Activated CD8-positive, alpha-beta T cell treated with anti-CD3 and anti-CD28 coated beads for 36 hours (primary cell): ENCODE measurements at regions of chr1 and their contacts with region 1.

Region 1: DNA sequence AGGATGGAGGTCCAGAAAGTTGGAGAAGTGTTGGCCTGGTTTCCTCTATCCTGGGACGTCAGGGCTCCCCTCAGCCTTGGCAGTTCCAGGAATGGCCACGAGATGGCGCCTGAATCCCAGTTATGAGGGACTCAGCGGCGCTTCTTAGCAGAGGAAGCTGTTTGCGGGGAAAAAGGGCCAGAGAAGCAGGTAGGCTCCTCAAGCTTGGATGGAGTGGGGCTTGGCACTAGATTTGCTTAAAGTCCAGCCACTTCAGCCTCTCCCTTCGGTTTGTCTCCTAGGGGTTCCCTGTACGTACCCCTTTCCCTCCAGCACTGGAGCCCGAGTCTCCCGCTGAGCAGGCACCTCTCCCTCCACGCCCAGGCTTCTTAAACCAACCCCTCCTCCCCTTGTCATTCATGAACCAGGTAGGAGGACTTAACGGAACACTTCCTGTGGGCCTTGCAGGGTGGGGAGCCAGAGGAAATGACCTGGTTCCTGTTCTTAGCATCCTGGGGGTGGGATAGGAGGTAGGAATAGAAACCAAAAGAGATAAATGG is 32.0 kb upstream of the TENT5B start:
- DNase-seq: peak; percentile 94
- ATAC-seq: peak; percentile 96
- H3K4me3 Mint-ChIP-seq: peak overlapping the region; percentile 39
- H3K27ac Mint-ChIP-seq: no peak overlapping the region
- H3K4me1 Mint-ChIP-seq: peaks cover 15% of the 10 kb centered on the region
- H3K27me3 Mint-ChIP-seq: no peaks in the 10 kb centered on the region
- CTCF ChIP-seq: peak; percentile 92

Region 2: GRCh38 chr1:26938004-26938658 is 106.6 kb before region 1 on chr1:
- CTCF ChIA-PET with region 1: no interaction called
- POLR2A ChIA-PET with region 1: no interaction called
- intact Hi-C with region 1: no loop called
- DNase-seq: no peak
- ATAC-seq: no peak
- H3K4me3 Mint-ChIP-seq: no peak overlapping the region
- H3K27ac Mint-ChIP-seq: no peak overlapping the region
- H3K4me1 Mint-ChIP-seq: peaks cover 5% of the 10 kb centered on the region
- H3K27me3 Mint-ChIP-seq: no peaks in the 10 kb centered on the region
- CTCF ChIP-seq: no peak

Region 3: GRCh38 chr1:27021354-27022031 is 23.2 kb before region 1 on chr1:
- CTCF ChIA-PET with region 1: interaction called, 10 read pairs
- POLR2A ChIA-PET with region 1: no interaction called
- intact Hi-C with region 1: no loop called
- DNase-seq: no peak
- ATAC-seq: no peak
- H3K4me3 Mint-ChIP-seq: no peak overlapping the region
- H3K27ac Mint-ChIP-seq: no peak overlapping the region
- H3K4me1 Mint-ChIP-seq: no peaks in the 10 kb centered on the region
- H3K27me3 Mint-ChIP-seq: no peaks in the 10 kb centered on the region
- CTCF ChIP-seq: no peak

Region 4: GRCh38 chr1:27057801-27058625 is 13.3 kb after region 1 on chr1:
- CTCF ChIA-PET with region 1: interaction called, 105 read pairs
- POLR2A ChIA-PET with region 1: interaction called, 3 read pairs
- intact Hi-C with region 1: no loop called
- DNase-seq: no peak
- ATAC-seq: no peak
- H3K4me3 Mint-ChIP-seq: no peak overlapping the region
- H3K27ac Mint-ChIP-seq: no peak overlapping the region
- H3K4me1 Mint-ChIP-seq: no peaks in the 10 kb centered on the region
- H3K27me3 Mint-ChIP-seq: no peaks in the 10 kb centered on the region
- CTCF ChIP-seq: no peak

Region 5: DNA sequence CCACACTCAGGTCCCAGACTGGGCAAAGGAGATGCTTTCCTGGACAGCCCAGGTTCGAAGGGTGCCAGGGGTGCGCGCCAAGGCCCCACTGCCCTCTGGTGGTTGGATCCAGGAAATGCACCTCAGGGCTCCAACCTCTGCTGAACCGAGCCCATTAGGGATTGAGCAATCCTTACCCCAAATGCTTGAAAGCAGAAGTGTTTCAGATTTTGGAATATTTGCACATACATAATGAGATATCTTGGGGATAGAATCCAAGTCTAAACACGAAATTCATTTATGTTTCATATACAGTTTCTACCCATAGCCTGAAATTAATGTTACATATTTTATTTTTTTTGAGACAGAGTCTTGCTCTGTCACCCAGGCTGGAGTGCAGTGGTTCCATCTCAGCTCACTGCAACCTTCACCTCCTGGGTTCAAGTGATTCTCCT is 52.8 kb after region 1 on chr1:
- CTCF ChIA-PET with region 1: interaction called, 307 read pairs
- POLR2A ChIA-PET with region 1: interaction called, 8 read pairs
- intact Hi-C with region 1: loop called (anchors 1 kb)
- DNase-seq: peak; percentile 80
- ATAC-seq: peak; percentile 79
- H3K4me3 Mint-ChIP-seq: no peak overlapping the region
- H3K27ac Mint-ChIP-seq: no peak overlapping the region
- H3K4me1 Mint-ChIP-seq: peaks cover 10% of the 10 kb centered on the region
- H3K27me3 Mint-ChIP-seq: no peaks in the 10 kb centered on the region
- CTCF ChIP-seq: peak; percentile 95

Region 6: GRCh38 chr1:27111626-27112573 is 67.2 kb after region 1 on chr1:
- CTCF ChIA-PET with region 1: interaction called, 40 read pairs
- POLR2A ChIA-PET with region 1: interaction called, 3 read pairs
- intact Hi-C with region 1: no loop called
- DNase-seq: peak; percentile 92
- ATAC-seq: peak; percentile 97
- H3K4me3 Mint-ChIP-seq: peak overlapping the region; percentile 49
- H3K27ac Mint-ChIP-seq: peak overlapping the region; percentile 90
- H3K4me1 Mint-ChIP-seq: peaks cover 55% of the 10 kb centered on the region
- H3K27me3 Mint-ChIP-seq: no peaks in the 10 kb centered on the region
- CTCF ChIP-seq: no peak

Region 7: DNA sequence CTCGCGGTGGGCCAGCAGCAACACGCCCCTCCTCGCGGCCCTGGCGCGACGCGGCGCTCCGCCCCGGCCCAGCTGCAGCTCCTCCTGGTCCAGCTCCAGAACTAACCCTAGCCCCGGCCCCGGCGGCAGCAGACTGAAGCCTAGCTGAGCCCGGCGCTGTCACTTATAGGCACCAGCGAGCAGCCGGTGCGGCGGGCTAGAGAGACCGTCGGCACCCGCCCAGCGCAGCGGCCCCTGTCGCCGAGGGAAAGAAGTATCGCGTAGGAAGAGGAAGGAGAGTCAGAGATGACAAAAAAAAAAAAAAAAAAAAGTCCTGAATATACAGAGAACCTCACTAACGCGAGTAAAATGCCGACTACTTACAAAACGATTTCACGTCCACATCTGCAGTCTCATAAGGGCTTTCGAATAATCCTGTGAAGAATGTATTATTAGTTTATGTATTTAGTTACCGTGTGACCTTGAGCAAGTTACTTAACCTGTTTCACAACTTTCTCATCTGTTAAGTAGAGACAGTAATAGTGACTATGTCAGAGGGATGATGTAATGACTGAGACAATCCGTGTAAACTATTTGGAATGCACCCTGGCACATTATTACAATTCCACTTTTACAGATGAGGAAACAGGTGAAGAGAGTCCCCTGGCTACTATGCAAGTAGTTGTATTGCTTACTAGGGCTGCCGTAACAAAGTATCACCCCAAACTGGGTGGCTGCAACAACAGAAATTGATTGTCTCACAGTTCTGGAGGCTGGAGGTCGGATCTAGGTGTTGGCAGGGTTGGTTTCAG is 110.5 kb after region 1 on chr1 and contains the start of gene SLC9A1:
- CTCF ChIA-PET with region 1: interaction called, 16 read pairs
- POLR2A ChIA-PET with region 1: no interaction called
- intact Hi-C with region 1: no loop called
- DNase-seq: peak; percentile 91
- ATAC-seq: peak; percentile 94
- H3K4me3 Mint-ChIP-seq: peak within 1 kb of the TSS; percentile 79
- H3K27ac Mint-ChIP-seq: peak within 1 kb of the TSS; percentile 96
- H3K4me1 Mint-ChIP-seq: peaks cover 46% of the 10 kb centered on the region
- H3K27me3 Mint-ChIP-seq: no peaks in the 10 kb centered on the region
- CTCF ChIP-seq: peak; percentile 88
- total RNA-seq, gene SLC9A1: 14.8 to 15.3 TPM

Region 8: DNA sequence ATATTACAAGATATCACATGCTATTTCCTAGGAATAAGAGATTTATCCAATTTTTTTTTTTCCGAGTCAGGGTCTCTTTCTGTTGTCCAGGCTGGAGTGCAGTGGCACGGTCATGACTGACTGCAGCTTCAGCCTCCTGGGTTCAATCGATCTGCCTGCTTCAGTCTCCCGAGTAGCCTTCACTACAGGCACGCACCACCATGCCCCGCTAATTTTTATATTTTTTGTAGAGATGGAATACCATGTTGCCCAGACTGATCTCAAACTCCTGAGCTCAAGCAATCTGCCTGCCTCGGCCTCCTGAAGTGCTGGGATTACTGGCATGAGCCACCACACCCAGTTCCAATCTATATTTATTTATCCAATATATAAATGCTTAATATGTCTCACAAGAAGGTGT is 171.8 kb after region 1 on chr1:
- CTCF ChIA-PET with region 1: no interaction called
- POLR2A ChIA-PET with region 1: no interaction called
- intact Hi-C with region 1: no loop called
- DNase-seq: no peak
- ATAC-seq: no peak
- H3K4me3 Mint-ChIP-seq: no peak overlapping the region
- H3K27ac Mint-ChIP-seq: no peak overlapping the region
- H3K4me1 Mint-ChIP-seq: no peaks in the 10 kb centered on the region
- H3K27me3 Mint-ChIP-seq: no peaks in the 10 kb centered on the region
- CTCF ChIP-seq: no peak

Region 9: DNA sequence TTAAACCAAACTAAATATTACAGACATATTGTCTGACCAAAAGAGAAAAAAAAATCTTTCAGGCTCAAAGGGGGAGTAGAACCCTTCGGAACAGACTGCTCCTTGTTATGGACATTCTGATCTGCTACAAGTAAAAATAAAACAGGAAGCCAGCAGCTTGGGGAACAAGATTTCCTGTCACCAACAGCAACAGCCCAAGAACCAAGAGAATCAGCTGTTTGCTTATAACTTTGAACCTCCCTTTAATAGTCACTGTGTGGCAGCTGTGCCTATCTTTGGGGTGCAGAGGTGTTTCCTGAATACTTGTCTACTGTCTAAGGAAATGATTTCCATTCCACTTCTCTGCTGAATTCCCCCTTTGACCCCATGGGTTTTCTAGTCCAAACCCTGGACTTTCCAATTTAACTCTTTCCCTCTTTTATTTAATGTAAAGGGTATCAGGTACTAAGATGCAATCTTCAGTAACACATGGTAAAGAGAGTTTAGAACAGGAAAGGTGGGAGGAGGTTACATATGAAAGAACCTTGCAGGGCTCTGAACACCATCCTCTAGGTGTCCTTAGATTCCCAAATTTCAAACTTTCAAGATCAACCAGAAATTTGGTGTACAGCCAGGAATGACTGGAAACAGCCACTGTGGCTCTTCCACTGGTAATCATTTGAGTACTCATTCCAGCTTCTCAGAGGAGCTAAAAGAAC is 386.4 kb after region 1 on chr1:
- CTCF ChIA-PET with region 1: no interaction called
- POLR2A ChIA-PET with region 1: no interaction called
- intact Hi-C with region 1: no loop called
- DNase-seq: no peak
- ATAC-seq: peak; percentile 41
- H3K4me3 Mint-ChIP-seq: no peak overlapping the region
- H3K27ac Mint-ChIP-seq: peak overlapping the region; percentile 79
- H3K4me1 Mint-ChIP-seq: peaks cover 80% of the 10 kb centered on the region
- H3K27me3 Mint-ChIP-seq: no peaks in the 10 kb centered on the region
- CTCF ChIP-seq: no peak